Heart left ventricle (tissue), 16 donors: ENCODE measurements at regions of chr4 and their contacts with region 1.

Region 1: DNA sequence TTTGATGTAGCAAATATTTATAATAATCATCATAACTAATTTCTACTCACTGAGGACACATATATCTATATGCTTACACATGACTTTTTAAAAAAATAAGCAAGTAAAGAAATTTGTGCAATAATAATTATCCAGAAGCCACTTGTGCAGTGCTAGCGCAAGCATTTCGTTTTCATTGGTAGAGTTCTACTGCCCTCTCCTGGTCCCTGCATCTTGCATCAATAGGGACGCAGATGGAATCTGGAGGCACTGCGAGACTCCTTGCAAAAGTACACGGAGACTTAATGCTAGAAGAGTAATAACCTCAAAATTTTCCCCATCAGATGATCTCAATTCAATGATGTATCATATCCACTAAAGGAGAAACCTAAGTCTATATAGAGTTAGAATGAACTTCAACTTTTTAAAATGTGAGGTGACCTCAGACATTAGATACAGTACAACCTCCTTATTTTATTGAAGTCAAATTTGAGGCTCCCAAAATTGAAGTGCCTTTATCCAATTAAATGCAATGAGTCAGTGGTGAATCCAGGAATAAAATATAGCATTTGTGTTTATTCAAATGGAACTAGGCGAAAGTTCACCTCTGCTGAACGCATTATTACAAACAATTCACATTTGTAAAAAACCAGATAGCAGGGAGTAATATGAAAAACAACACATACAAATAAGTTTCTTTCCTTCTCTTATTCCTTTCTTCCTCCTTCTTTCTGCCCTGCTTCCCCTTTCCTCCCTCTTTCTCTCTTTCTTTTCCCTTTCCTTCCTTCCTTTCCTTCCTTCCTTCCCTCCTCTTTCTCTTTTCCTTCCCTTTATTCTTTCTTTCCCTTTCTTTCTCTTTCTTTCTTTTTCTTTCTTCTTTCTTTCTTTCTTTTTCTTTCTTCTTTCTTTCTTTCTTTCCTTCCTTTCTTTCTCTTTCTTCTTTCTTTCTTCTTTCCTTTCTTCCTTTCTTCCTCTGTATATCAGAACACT is 450.0 kb downstream of the ANKRD50 start:
- DNase-seq: peak in 4 of 5 donors; percentile 36 to 58 (median 51)
- ATAC-seq: peak in 3 of 4 donors; percentile 82 to 96 (median 87)
- H3K4me3 ChIP-seq: no peak overlapping the region
- H3K27ac ChIP-seq: peak overlapping the region in 1 of 12 donors; percentile 19
- H3K4me1 ChIP-seq: peaks cover 0 to 6% (median 0%) of the 10 kb centered on the region in 12 donors
- H3K27me3 ChIP-seq: no peaks in the 10 kb centered on the region
- CTCF ChIP-seq: peak; percentile 69 to 95 (median 84)
- POLR2A ChIP-seq: no peak

Region 2: DNA sequence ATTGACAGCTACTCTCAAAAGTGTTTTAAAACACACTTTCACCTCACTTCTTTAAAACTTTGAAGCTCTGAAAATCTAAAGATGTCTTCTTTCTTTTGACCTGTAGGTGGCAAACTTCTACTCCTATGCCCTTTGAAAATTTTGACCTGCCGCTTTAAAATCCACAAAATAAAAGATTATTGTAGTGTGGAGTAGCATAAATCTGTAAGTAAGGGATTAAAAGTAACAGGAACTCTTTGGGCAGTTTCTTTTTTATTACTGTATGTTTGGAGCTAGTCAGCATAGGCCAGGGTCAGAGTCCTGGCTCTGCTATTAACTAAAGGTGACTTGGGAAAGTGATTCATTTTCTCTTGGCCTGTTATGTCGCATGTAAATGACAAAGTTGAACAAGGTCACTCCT is 1504.5 kb before region 1 on chr4:
- intact Hi-C with region 1: loop called in 1 of 10 experiments (anchors 10 kb)
- DNase-seq: no peak
- ATAC-seq: peak in 2 of 4 donors; percentile 45 to 58
- H3K4me3 ChIP-seq: no peak overlapping the region
- H3K27ac ChIP-seq: no peak overlapping the region
- H3K4me1 ChIP-seq: peaks cover 0 to 13% (median 4%) of the 10 kb centered on the region in 12 donors
- H3K27me3 ChIP-seq: no peaks in the 10 kb centered on the region
- CTCF ChIP-seq: peak; percentile 66 to 89 (median 77)
- POLR2A ChIP-seq: no peak

Region 3: GRCh38 chr4:123127218-123127617 is 1135.3 kb before region 1 on chr4:
- intact Hi-C with region 1: loop called in 1 of 10 experiments (anchors 10 kb)
- DNase-seq: no peak
- ATAC-seq: peak in 2 of 4 donors; percentile 49 to 63
- H3K4me3 ChIP-seq: no peak overlapping the region
- H3K27ac ChIP-seq: peak overlapping the region in 2 of 12 donors; percentile 25 to 48
- H3K4me1 ChIP-seq: peaks cover 0 to 12% (median 5%) of the 10 kb centered on the region in 12 donors
- H3K27me3 ChIP-seq: no peaks in the 10 kb centered on the region
- CTCF ChIP-seq: peak in 10 of 12 donors; percentile 24 to 70 (median 52)
- POLR2A ChIP-seq: no peak

Region 4: GRCh38 chr4:123278755-123279154 is 983.7 kb before region 1 on chr4:
- intact Hi-C with region 1: no loop called
- DNase-seq: no peak
- ATAC-seq: no peak
- H3K4me3 ChIP-seq: no peak overlapping the region
- H3K27ac ChIP-seq: no peak overlapping the region
- H3K4me1 ChIP-seq: peaks cover 0 to 3% (median 0%) of the 10 kb centered on the region in 12 donors
- H3K27me3 ChIP-seq: no peaks in the 10 kb centered on the region
- CTCF ChIP-seq: no peak
- POLR2A ChIP-seq: no peak

Region 5: GRCh38 chr4:123564758-123565346 is 697.6 kb before region 1 on chr4:
- intact Hi-C with region 1: loop called in 1 of 10 experiments (anchors 10 kb)
- DNase-seq: peak in 3 of 5 donors; percentile 34 to 60 (median 46)
- ATAC-seq: peak; percentile 86 to 95 (median 92)
- H3K4me3 ChIP-seq: no peak overlapping the region
- H3K27ac ChIP-seq: no peak overlapping the region
- H3K4me1 ChIP-seq: peaks cover 0 to 14% (median 5%) of the 10 kb centered on the region in 12 donors
- H3K27me3 ChIP-seq: no peaks in the 10 kb centered on the region
- CTCF ChIP-seq: peak; percentile 63 to 87 (median 76)
- POLR2A ChIP-seq: no peak

Region 6: GRCh38 chr4:123770884-123771283 is 491.6 kb before region 1 on chr4:
- intact Hi-C with region 1: loop called in 1 of 10 experiments (anchors 5 kb)
- DNase-seq: no peak
- ATAC-seq: no peak
- H3K4me3 ChIP-seq: no peak overlapping the region
- H3K27ac ChIP-seq: no peak overlapping the region
- H3K4me1 ChIP-seq: no peaks in the 10 kb centered on the region
- H3K27me3 ChIP-seq: no peaks in the 10 kb centered on the region
- CTCF ChIP-seq: no peak
- POLR2A ChIP-seq: no peak

Region 7: GRCh38 chr4:124401606-124402005 is 139.1 kb after region 1 on chr4:
- intact Hi-C with region 1: no loop called
- DNase-seq: no peak
- ATAC-seq: no peak
- H3K4me3 ChIP-seq: no peak overlapping the region
- H3K27ac ChIP-seq: no peak overlapping the region
- H3K4me1 ChIP-seq: no peaks in the 10 kb centered on the region
- H3K27me3 ChIP-seq: no peaks in the 10 kb centered on the region
- CTCF ChIP-seq: no peak
- POLR2A ChIP-seq: no peak